Activated naive CD4-positive, alpha-beta T cell treated with anti-CD3 and anti-CD28 coated beads for 36 hours (primary cell): ENCODE measurements at regions of chr14 and their contacts with region 1.

Region 1: GRCh38 chr14:73728717-73729330 is 14.6 kb upstream of the PNMA1 start:
- DNase-seq: peak; percentile 94
- H3K4me3 Mint-ChIP-seq: no peak overlapping the region
- H3K27ac Mint-ChIP-seq: peak overlapping the region; percentile 74
- H3K4me1 Mint-ChIP-seq: peaks cover 24% of the 10 kb centered on the region
- H3K27me3 Mint-ChIP-seq: no peaks in the 10 kb centered on the region

Region 2: DNA sequence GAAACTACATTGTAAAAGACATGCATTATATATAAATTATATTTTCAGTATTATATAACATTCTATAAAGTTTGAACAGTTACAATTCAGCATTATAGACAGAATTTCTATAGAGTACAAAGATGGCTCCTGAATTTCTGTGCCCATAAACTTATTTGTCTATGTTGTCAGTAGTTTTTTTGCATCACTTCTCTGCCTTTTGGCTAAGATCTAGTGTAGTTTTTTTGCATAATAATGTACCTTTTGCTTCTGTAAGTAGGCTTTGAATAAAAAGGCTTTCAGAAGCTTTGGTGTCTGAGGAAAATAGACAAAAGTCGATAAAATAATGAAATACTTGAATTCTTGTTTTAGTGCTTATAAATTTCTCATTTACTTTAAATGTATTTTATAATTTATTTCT is 73.0 kb before region 1 on chr14:
- CTCF ChIA-PET with region 1: no interaction called
- intact Hi-C with region 1: no loop called
- DNase-seq: no peak
- H3K4me3 Mint-ChIP-seq: no peak overlapping the region
- H3K27ac Mint-ChIP-seq: no peak overlapping the region
- H3K4me1 Mint-ChIP-seq: no peaks in the 10 kb centered on the region
- H3K27me3 Mint-ChIP-seq: no peaks in the 10 kb centered on the region

Region 3: DNA sequence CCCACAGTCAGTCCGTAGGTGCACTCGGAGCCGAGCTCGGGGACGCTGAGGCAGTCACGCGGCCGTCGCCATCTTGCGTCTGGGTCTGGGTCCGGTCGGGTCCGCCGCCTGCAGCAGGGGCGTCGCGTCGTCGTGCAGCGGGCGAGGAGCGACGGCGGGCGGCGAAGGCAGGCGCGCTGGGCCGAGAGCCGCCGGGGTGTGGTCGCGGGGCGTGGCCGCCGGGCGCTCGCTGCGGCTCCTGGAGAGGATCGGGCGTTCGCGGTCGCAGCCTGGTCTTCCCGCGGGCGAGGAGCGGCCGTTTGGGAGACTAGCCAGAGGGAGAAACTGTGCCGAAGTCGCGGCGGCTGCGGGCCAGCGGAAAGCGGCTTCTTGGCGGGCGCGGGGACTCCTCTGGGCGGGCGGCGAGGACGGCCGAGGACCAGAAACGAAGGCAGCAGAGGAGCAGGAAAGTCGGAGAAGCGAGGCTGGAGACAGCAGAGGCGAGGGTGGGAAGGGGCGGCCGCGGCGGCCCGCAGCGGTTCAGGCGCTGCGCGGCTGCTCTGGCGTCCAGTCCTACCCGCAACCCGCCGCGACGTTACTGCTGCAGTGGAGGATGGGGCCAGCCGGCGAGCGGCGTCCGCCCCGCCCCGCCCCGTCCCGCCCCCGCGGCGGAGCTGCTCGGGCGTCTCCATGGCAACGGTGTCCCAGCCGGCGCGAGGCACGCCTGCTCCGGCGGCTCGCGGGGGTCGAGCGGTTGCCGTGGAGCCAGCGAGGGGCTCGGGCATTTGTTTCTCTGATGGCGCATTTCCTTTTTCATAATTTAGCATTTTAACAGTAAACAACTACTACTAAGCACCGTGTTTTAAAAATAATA is 14.8 kb before region 1 on chr14 and contains the start of gene PNMA1:
- CTCF ChIA-PET with region 1: interaction called, 13 read pairs
- intact Hi-C with region 1: no loop called
- DNase-seq: peak; percentile 84
- H3K4me3 Mint-ChIP-seq: peak within 1 kb of the TSS; percentile 99
- H3K27ac Mint-ChIP-seq: peak within 1 kb of the TSS; percentile 85
- H3K4me1 Mint-ChIP-seq: peaks cover 13% of the 10 kb centered on the region
- H3K27me3 Mint-ChIP-seq: no peaks in the 10 kb centered on the region
- total RNA-seq, gene PNMA1: 18.5 to 19.2 TPM

Region 4: GRCh38 chr14:73746520-73747378 is 17.9 kb after region 1 on chr14:
- CTCF ChIA-PET with region 1: interaction called, 80 read pairs
- intact Hi-C with region 1: loop called (anchors 2 kb)
- DNase-seq: no peak
- H3K4me3 Mint-ChIP-seq: no peak overlapping the region
- H3K27ac Mint-ChIP-seq: peak overlapping the region; percentile 2
- H3K4me1 Mint-ChIP-seq: peaks cover 99% of the 10 kb centered on the region
- H3K27me3 Mint-ChIP-seq: no peaks in the 10 kb centered on the region

Region 5: DNA sequence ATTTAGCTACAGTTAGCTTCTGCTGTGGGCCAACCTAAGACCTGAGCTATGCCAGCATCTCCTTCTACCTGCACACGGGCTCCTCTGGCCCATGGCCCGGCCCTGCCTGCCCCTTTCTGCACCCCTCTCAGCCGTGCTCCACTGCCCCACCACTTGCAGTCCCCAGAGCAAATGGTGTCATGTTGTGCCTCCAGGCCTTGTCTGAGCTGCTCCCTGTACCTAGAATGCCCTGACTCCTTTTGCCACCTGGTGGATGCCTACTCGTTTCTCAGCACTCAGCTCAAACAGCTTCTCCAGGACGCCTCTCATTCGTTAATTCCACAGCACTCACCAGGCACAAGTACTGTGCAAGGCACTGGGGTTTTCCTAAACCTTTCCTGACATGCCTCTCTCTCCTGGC is 48.6 kb after region 1 on chr14:
- CTCF ChIA-PET with region 1: interaction called, 27 read pairs
- intact Hi-C with region 1: loop called (anchors 1 kb)
- DNase-seq: peak; percentile 53
- H3K4me3 Mint-ChIP-seq: no peak overlapping the region
- H3K27ac Mint-ChIP-seq: peak overlapping the region; percentile 6
- H3K4me1 Mint-ChIP-seq: peaks cover 56% of the 10 kb centered on the region
- H3K27me3 Mint-ChIP-seq: no peaks in the 10 kb centered on the region

Region 6: DNA sequence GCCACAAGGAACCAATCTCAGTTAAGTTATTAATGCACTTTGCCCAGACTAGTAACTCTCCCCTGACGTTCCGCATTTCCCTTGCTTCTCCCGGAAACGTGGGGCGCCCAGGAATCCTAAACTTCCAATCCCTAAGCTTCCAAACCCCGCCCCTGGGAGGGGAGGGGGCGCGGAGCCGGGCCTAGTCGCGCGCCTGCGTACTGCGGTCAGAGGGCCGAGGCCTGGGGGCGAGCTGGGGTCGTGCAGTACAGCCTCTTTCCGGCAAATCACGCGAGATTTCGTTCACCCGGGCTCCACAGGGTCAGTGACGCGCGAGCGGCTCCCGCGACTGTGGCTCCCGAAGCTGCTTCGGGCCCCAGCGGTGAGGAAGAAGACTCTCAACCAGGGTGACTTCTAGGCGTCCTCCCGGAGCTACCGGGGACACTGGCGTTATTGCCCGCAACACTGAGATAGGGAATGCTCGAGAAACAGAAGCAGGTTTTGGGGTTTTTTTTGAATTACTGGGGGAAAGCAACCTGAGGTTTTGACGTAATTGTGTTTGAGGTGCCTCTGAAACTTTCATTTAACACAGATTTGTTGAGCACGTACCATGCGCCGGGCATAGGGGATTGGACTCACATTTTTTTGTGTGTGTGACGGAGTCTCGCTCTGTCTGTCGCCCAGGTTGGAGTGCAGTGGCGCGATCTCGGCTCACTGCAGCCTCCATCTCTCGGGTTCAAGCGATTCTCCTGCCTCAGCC is 123.0 kb after region 1 on chr14 and contains the start of gene PTGR2:
- CTCF ChIA-PET with region 1: interaction called, 13 read pairs
- intact Hi-C with region 1: no loop called
- DNase-seq: peak; percentile 91
- H3K4me3 Mint-ChIP-seq: peak within 1 kb of the TSS; percentile 92
- H3K27ac Mint-ChIP-seq: peak within 1 kb of the TSS; percentile 96
- H3K4me1 Mint-ChIP-seq: peaks cover 20% of the 10 kb centered on the region
- H3K27me3 Mint-ChIP-seq: no peaks in the 10 kb centered on the region
- total RNA-seq, gene PTGR2: 10.7 to 14.1 TPM

Region 7: GRCh38 chr14:74038015-74038859 is 309.4 kb after region 1 on chr14:
- CTCF ChIA-PET with region 1: no interaction called
- intact Hi-C with region 1: loop called (anchors 1 kb)
- DNase-seq: peak; percentile 8
- H3K4me3 Mint-ChIP-seq: no peak overlapping the region
- H3K27ac Mint-ChIP-seq: no peak overlapping the region
- H3K4me1 Mint-ChIP-seq: no peaks in the 10 kb centered on the region
- H3K27me3 Mint-ChIP-seq: no peaks in the 10 kb centered on the region